ENCODE measurements at regions of chr6 and their contacts with region 1.

Region 1: GRCh38 chr6:16183187-16183664 is 54.3 kb downstream of the MYLIP start:
- DNase-seq: peak in 1 of 2 experiments; percentile 62
- H3K4me3 ChIP-seq: no peak overlapping the region
- H3K4me1 ChIP-seq: no peaks in the 10 kb centered on the region
- H3K27me3 ChIP-seq: no peaks in the 10 kb centered on the region

Region 2: DNA sequence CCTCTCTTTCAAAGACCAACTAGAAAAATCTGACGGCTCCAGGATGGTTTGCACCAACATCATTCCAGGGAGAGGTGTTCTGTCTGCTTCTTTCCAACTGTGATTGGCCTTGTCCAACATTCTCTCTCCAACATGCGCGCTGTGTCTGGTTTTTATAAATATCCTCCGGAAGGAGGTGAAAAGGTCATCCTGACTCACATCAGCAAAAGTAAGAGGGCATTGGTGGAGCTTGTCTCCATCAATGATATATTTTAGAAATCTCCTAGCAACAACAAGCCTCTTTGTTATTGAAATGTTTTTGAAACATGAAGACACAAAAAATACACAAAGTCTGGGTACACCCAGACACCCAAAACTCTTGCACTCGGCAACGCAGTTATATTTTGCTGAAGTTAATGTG is 1412.7 kb before region 1 on chr6:
- in situ Hi-C with region 1: no loop called
- DNase-seq: no peak
- H3K4me3 ChIP-seq: no peak overlapping the region
- H3K4me1 ChIP-seq: peaks cover 16% of the 10 kb centered on the region
- H3K27me3 ChIP-seq: no peaks in the 10 kb centered on the region

Region 3: GRCh38 chr6:15682965-15683822 is 500.0 kb before region 1 on chr6:
- in situ Hi-C with region 1: loop called (anchors 10 kb)
- DNase-seq: no peak
- H3K4me3 ChIP-seq: no peak overlapping the region
- H3K4me1 ChIP-seq: no peaks in the 10 kb centered on the region
- H3K27me3 ChIP-seq: no peaks in the 10 kb centered on the region

Region 4: DNA sequence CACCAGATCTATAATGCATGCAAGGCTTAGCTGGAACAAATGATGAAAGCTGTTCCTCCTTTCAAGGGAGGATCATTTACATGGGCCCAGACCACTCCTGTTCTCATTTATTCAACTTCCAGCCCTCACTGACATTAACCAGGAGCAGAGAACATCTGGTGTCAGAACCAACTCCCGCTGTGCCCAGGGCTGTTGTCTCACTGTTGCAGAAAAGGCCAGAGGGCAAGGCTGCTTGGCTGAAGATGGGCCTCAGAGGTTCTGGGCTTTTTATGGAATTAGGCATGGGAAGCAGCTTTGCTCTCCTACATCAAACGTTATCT is 219.3 kb after region 1 on chr6:
- in situ Hi-C with region 1: no loop called
- DNase-seq: no peak
- H3K4me3 ChIP-seq: no peak overlapping the region
- H3K4me1 ChIP-seq: no peaks in the 10 kb centered on the region
- H3K27me3 ChIP-seq: no peaks in the 10 kb centered on the region

Measured in HAP-1 (cell line).